K562 (cell line): ENCODE measurements at regions of chr4 and their contacts with region 1.

Region 1: GRCh38 chr4:123390846-123391456 is 5.6 kb upstream of the SPRY1 start:
- DNase-seq: peak in 3 of 4 experiments; percentile 18 to 24 (median 20)
- ATAC-seq: peak; percentile 53; the same call in 1 of the 3 replicates
- H3K4me3 ChIP-seq: no peak overlapping the region
- H3K27ac ChIP-seq: no peak overlapping the region
- H3K4me1 ChIP-seq: peaks cover 0 to 8% of the 10 kb centered on the region in 2 experiments; a peak in 2 of 5 replicates
- H3K27me3 ChIP-seq: no peaks in the 10 kb centered on the region
- CTCF ChIP-seq: peak; percentile 26 to 56 (median 33); a peak in 3 of 6 replicates
- EP300 ChIP-seq: no peak
- POLR2A ChIP-seq: no peak
- RAD21 ChIP-seq: peak in 1 of 2 experiments; percentile 57; a peak in 2 of 4 replicates

Region 2: GRCh38 chr4:123505095-123506010 is 114.4 kb after region 1 on chr4:
- CTCF ChIA-PET with region 1: no interaction called
- POLR2A ChIA-PET with region 1: no interaction called
- in situ Hi-C with region 1: no loop called
- intact Hi-C with region 1: no loop called
- DNase-seq: peak in 3 of 4 experiments; percentile 14 to 18 (median 17)
- ATAC-seq: peak; percentile 69
- H3K4me3 ChIP-seq: peak overlapping the region; percentile 37
- H3K27ac ChIP-seq: no peak overlapping the region
- H3K4me1 ChIP-seq: peaks cover 9 to 14% of the 10 kb centered on the region in 2 experiments; a peak in 4 of 5 replicates
- H3K27me3 ChIP-seq: peaks cover 9 to 18% of the 10 kb centered on the region in 2 experiments; a peak in 3 of 5 replicates
- CTCF ChIP-seq: no peak
- EP300 ChIP-seq: no peak
- POLR2A ChIP-seq: no peak
- RAD21 ChIP-seq: no peak

Region 3: GRCh38 chr4:123661080-123661737 is 270.3 kb after region 1 on chr4:
- CTCF ChIA-PET with region 1: no interaction called
- POLR2A ChIA-PET with region 1: no interaction called
- in situ Hi-C with region 1: no loop called
- intact Hi-C with region 1: loop called (anchors 2 kb)
- DNase-seq: peak in 2 of 4 experiments; percentile 14 to 20
- ATAC-seq: no peak
- H3K4me3 ChIP-seq: no peak overlapping the region
- H3K27ac ChIP-seq: no peak overlapping the region
- H3K4me1 ChIP-seq: no peaks in the 10 kb centered on the region; a peak in 1 of 5 replicates
- H3K27me3 ChIP-seq: no peaks in the 10 kb centered on the region
- CTCF ChIP-seq: peak in 2 of 3 experiments; percentile 39 to 59; a peak in 3 of 6 replicates
- EP300 ChIP-seq: no peak
- POLR2A ChIP-seq: no peak
- RAD21 ChIP-seq: peak; percentile 30 to 62; a peak in 3 of 4 replicates